Calu3 (cell line): ENCODE measurements at regions of chr1 and their contacts with region 1.

Region 1: GRCh38 chr1:158002022-158002630 is 8.7 kb downstream of the KIRREL1 start:
- DNase-seq: no peak
- H3K4me3 Mint-ChIP-seq: no peak overlapping the region
- H3K27ac Mint-ChIP-seq: peak overlapping the region; percentile 52
- H3K4me1 Mint-ChIP-seq: peaks cover 16% of the 10 kb centered on the region
- H3K27me3 Mint-ChIP-seq: no peaks in the 10 kb centered on the region
- CTCF ChIP-seq: no peak

Region 2: GRCh38 chr1:157982136-157982535 is 20.0 kb before region 1 on chr1:
- CTCF ChIA-PET with region 1: interaction called, 11 read pairs
- intact Hi-C with region 1: no loop called
- DNase-seq: no peak
- H3K4me3 Mint-ChIP-seq: no peak overlapping the region
- H3K27ac Mint-ChIP-seq: no peak overlapping the region
- H3K4me1 Mint-ChIP-seq: peaks cover 7% of the 10 kb centered on the region
- H3K27me3 Mint-ChIP-seq: peaks cover 3% of the 10 kb centered on the region
- CTCF ChIP-seq: no peak

Region 3: DNA sequence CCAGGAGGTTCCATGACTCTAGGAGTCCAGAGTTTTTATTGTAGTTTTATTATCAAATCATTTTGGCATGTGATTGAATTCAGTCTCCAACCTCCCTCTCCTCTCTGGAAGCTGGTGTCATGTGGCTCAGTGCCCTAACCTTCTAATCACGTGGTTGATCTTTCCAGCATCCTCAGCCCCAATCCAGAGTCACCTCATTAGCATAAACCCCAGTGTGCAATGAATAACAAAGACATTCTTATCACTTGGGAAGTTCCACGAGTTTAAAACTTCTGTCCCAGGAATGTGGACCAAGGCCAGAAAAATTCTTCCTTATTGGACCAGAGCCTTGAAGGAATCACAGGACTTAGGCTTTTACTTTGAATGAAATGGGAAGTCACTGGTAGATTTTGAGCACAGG is 43.5 kb after region 1 on chr1:
- CTCF ChIA-PET with region 1: no interaction called
- intact Hi-C with region 1: no loop called
- DNase-seq: no peak
- H3K4me3 Mint-ChIP-seq: no peak overlapping the region
- H3K27ac Mint-ChIP-seq: no peak overlapping the region
- H3K4me1 Mint-ChIP-seq: no peaks in the 10 kb centered on the region
- H3K27me3 Mint-ChIP-seq: no peaks in the 10 kb centered on the region
- CTCF ChIP-seq: no peak